Transverse colon (tissue), 4 donors: ENCODE measurements at regions of chr10 and their contacts with region 1.

Region 1: DNA sequence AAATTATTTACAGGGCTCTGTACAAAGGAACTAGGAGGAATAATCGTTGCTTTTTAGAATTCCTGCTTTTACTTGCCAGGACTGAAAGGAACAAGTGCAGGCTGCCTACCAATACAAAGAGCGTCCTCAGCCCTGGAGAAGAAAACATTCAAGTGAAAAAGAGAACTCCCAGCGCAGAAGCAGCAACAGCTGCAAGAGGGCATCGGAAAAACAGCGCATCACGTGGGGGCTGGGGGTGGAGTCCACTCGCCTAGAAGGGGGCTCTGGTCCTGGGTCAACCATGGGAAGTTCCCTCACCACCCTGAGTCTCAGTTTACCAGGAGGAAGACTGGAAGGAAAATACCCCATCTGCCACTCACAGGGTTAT is 385 bp upstream of the C10orf90 start:
- DNase-seq: no peak
- H3K4me3 ChIP-seq: no peak overlapping the region
- H3K27ac ChIP-seq: no peak overlapping the region
- H3K4me1 ChIP-seq: no peaks in the 10 kb centered on the region
- H3K27me3 ChIP-seq: no peaks in the 10 kb centered on the region
- CTCF ChIP-seq: no peak
- EP300 ChIP-seq: no peak
- POLR2A ChIP-seq: no peak

Region 2: DNA sequence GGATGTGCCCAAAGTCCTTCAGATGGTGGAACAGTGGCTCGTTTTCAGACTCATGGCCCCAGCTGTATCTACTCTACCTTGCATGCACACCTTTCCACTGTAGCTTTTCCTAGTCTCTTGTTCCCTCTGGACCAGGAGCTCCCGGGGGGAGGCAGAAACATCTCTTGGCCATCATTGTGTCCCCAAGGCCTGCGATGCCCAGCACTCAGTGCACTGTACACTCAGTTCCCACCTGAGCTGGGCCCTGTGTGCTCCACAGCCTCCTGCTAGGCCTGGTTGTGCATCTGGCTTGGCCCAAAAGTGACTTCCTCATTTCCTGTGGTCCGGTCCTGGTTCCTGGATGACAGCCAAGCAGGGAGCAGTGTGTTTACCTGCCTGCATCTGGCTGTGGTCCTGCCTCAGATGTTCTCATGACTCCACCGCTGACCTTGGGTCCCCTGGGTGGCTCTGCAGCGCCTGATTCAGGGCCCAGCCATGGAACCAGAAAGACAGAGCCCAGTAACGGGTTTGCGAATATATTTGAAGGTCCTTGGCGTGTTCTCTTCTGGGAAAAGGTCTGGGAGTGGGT is 224.4 kb after region 1 on chr10:
- in situ Hi-C with region 1: loop called in 1 of 4 experiments (anchors 10 kb)
- intact Hi-C with region 1: no loop called
- DNase-seq: no peak
- H3K4me3 ChIP-seq: no peak overlapping the region
- H3K27ac ChIP-seq: no peak overlapping the region
- H3K4me1 ChIP-seq: no peaks in the 10 kb centered on the region
- H3K27me3 ChIP-seq: no peaks in the 10 kb centered on the region
- CTCF ChIP-seq: no peak
- EP300 ChIP-seq: no peak
- POLR2A ChIP-seq: no peak